ENCODE measurements at regions of chr11 and their contacts with region 1.

Region 1: DNA sequence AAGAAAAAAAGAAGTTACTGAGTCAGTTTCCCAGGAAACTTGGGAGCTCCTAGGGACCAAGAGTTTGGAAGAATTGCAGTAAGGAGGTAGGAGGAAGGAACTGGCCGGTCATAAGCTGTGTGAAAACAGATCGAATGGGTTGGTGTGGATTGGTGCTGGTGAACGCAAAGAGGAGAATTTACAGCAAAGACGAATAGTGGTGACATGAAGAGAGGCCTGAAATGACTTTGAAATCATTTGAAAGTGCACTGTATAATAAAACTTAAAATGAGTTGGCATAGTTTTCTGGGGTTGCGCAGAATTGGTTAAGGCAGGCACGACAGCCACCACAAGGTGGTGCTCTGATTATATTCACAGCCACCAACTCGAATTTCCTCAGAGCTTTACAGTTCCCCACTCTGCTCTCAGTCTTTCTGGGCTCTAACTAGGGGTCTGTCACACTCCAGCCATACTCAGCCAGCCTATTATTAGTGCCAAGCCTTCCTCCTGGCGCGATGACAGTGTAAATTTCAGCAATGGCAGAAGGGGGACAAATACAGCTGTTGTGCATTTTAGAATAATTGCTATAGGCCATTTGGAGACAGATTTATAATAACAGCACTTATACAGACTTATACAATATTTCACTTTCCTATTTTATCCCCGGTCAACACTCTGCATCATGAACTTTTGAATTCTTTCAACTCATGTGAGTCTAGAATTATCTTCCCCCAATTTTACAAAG is 8.3 kb upstream of the HTR3B start:
- DNase-seq: peak; percentile 75
- ATAC-seq: peak; percentile 84
- H3K4me3 ChIP-seq: no peak overlapping the region
- H3K4me3 Mint-ChIP-seq: no peak overlapping the region
- H3K27ac ChIP-seq: no peak overlapping the region
- H3K27ac Mint-ChIP-seq: no peak overlapping the region
- H3K4me1 ChIP-seq: peaks cover 5 to 13% of the 10 kb centered on the region in 2 donors
- H3K4me1 Mint-ChIP-seq: peaks cover 16% of the 10 kb centered on the region
- H3K27me3 ChIP-seq: no peaks in the 10 kb centered on the region
- H3K27me3 Mint-ChIP-seq: no peaks in the 10 kb centered on the region
- CTCF ChIP-seq: peak; percentile 84

Region 2: GRCh38 chr11:113796663-113797259 is 99.6 kb before region 1 on chr11:
- CTCF ChIA-PET with region 1: interaction called, 14 read pairs
- POLR2A ChIA-PET with region 1: no interaction called
- intact Hi-C with region 1: no loop called
- DNase-seq: peak; percentile 47
- ATAC-seq: peak; percentile 75
- H3K4me3 ChIP-seq: no peak overlapping the region
- H3K4me3 Mint-ChIP-seq: no peak overlapping the region
- H3K27ac ChIP-seq: no peak overlapping the region
- H3K27ac Mint-ChIP-seq: no peak overlapping the region
- H3K4me1 ChIP-seq: no peaks in the 10 kb centered on the region
- H3K4me1 Mint-ChIP-seq: no peaks in the 10 kb centered on the region
- H3K27me3 ChIP-seq: no peaks in the 10 kb centered on the region
- H3K27me3 Mint-ChIP-seq: no peaks in the 10 kb centered on the region
- CTCF ChIP-seq: peak; percentile 72

Region 3: GRCh38 chr11:113967361-113967760 is 71.0 kb after region 1 on chr11:
- CTCF ChIA-PET with region 1: interaction called, 10 read pairs
- POLR2A ChIA-PET with region 1: no interaction called
- intact Hi-C with region 1: no loop called
- DNase-seq: peak; percentile 24
- ATAC-seq: peak; percentile 63
- H3K4me3 ChIP-seq: no peak overlapping the region
- H3K4me3 Mint-ChIP-seq: no peak overlapping the region
- H3K27ac ChIP-seq: no peak overlapping the region
- H3K27ac Mint-ChIP-seq: no peak overlapping the region
- H3K4me1 ChIP-seq: peaks cover 8 to 27% of the 10 kb centered on the region in 2 donors
- H3K4me1 Mint-ChIP-seq: peaks cover 17% of the 10 kb centered on the region
- H3K27me3 ChIP-seq: no peaks in the 10 kb centered on the region
- H3K27me3 Mint-ChIP-seq: no peaks in the 10 kb centered on the region
- CTCF ChIP-seq: no peak

Region 4: GRCh38 chr11:114036156-114036811 is 140.0 kb after region 1 on chr11:
- CTCF ChIA-PET with region 1: interaction called, 28 read pairs
- POLR2A ChIA-PET with region 1: no interaction called
- intact Hi-C with region 1: loop called (anchors 1 kb)
- DNase-seq: peak; percentile 72
- ATAC-seq: peak; percentile 93
- H3K4me3 ChIP-seq: peak overlapping the region in 3 of 5 experiments; percentile 18 to 48 (median 22)
- H3K4me3 Mint-ChIP-seq: no peak overlapping the region
- H3K27ac ChIP-seq: no peak overlapping the region
- H3K27ac Mint-ChIP-seq: no peak overlapping the region
- H3K4me1 ChIP-seq: peaks cover 0 to 12% of the 10 kb centered on the region in 2 donors
- H3K4me1 Mint-ChIP-seq: peaks cover 7% of the 10 kb centered on the region
- H3K27me3 ChIP-seq: peaks cover 0 to 17% (median 4%) of the 10 kb centered on the region in 4 experiments
- H3K27me3 Mint-ChIP-seq: peaks cover 28% of the 10 kb centered on the region
- CTCF ChIP-seq: peak; percentile 69

Region 5: GRCh38 chr11:114187173-114187572 is 290.9 kb after region 1 on chr11:
- CTCF ChIA-PET with region 1: interaction called, 11 read pairs
- POLR2A ChIA-PET with region 1: no interaction called
- intact Hi-C with region 1: no loop called
- DNase-seq: peak; percentile 84
- ATAC-seq: peak; percentile 82
- H3K4me3 ChIP-seq: peak overlapping the region in 2 of 5 experiments; percentile 10 to 17
- H3K4me3 Mint-ChIP-seq: peak overlapping the region; percentile 77
- H3K27ac ChIP-seq: peak overlapping the region; percentile 92 to 98
- H3K27ac Mint-ChIP-seq: peak overlapping the region; percentile 98
- H3K4me1 ChIP-seq: peaks cover 67 to 74% of the 10 kb centered on the region in 2 donors
- H3K4me1 Mint-ChIP-seq: peaks cover 73% of the 10 kb centered on the region
- H3K27me3 ChIP-seq: no peaks in the 10 kb centered on the region
- H3K27me3 Mint-ChIP-seq: no peaks in the 10 kb centered on the region
- CTCF ChIP-seq: no peak

Region 6: GRCh38 chr11:114250993-114251814 is 354.9 kb after region 1 on chr11:
- CTCF ChIA-PET with region 1: interaction called, 472 read pairs
- POLR2A ChIA-PET with region 1: no interaction called
- intact Hi-C with region 1: no loop called
- DNase-seq: no peak
- ATAC-seq: no peak
- H3K4me3 ChIP-seq: no peak overlapping the region
- H3K4me3 Mint-ChIP-seq: no peak overlapping the region
- H3K27ac ChIP-seq: no peak overlapping the region
- H3K27ac Mint-ChIP-seq: no peak overlapping the region
- H3K4me1 ChIP-seq: peaks cover 4 to 8% of the 10 kb centered on the region in 2 donors
- H3K4me1 Mint-ChIP-seq: peaks cover 9% of the 10 kb centered on the region
- H3K27me3 ChIP-seq: no peaks in the 10 kb centered on the region
- H3K27me3 Mint-ChIP-seq: peaks cover 5% of the 10 kb centered on the region
- CTCF ChIP-seq: no peak